Naive thymus-derived CD4-positive, alpha-beta T cell (primary cell): ENCODE measurements at regions of chr14 and their contacts with region 1.

Region 1: GRCh38 chr14:21498553-21499526 is 12.3 kb downstream of the METTL3 start:
- DNase-seq: peak in 7 of 9 donors; percentile 35 to 68 (median 61)
- ATAC-seq: peak; percentile 87
- H3K4me3 ChIP-seq: no peak overlapping the region
- H3K4me3 Mint-ChIP-seq: peak overlapping the region in 8 of 10 donors; percentile 2 to 39 (median 24)
- H3K27ac ChIP-seq: peak overlapping the region; percentile 52
- H3K27ac Mint-ChIP-seq: peak overlapping the region; percentile 56 to 90 (median 79)
- H3K4me1 ChIP-seq: peaks cover 4 to 8% of the 10 kb centered on the region in 2 donors
- H3K4me1 Mint-ChIP-seq: peaks cover 14 to 39% (median 28%) of the 10 kb centered on the region in 7 donors
- H3K27me3 ChIP-seq: no peaks in the 10 kb centered on the region
- H3K27me3 Mint-ChIP-seq: no peaks in the 10 kb centered on the region

Region 2: GRCh38 chr14:21486640-21487087 is 12.2 kb before region 1 on chr14:
- CTCF ChIA-PET with region 1: interaction called, 12 read pairs
- POLR2A ChIA-PET with region 1: interaction called, 4 read pairs
- intact Hi-C with region 1: no loop called
- DNase-seq: no peak
- ATAC-seq: no peak
- H3K4me3 ChIP-seq: no peak overlapping the region
- H3K4me3 Mint-ChIP-seq: no peak overlapping the region
- H3K27ac ChIP-seq: no peak overlapping the region
- H3K27ac Mint-ChIP-seq: peak overlapping the region in 2 of 9 donors; percentile 14 to 29
- H3K4me1 ChIP-seq: no peaks in the 10 kb centered on the region
- H3K4me1 Mint-ChIP-seq: peaks cover 0 to 18% (median 11%) of the 10 kb centered on the region in 7 donors
- H3K27me3 ChIP-seq: no peaks in the 10 kb centered on the region
- H3K27me3 Mint-ChIP-seq: no peaks in the 10 kb centered on the region

Region 3: GRCh38 chr14:21874167-21874566 is 375.3 kb after region 1 on chr14:
- CTCF ChIA-PET with region 1: no interaction called
- POLR2A ChIA-PET with region 1: no interaction called
- intact Hi-C with region 1: no loop called
- DNase-seq: peak in 1 of 9 donors; percentile 30
- ATAC-seq: peak; percentile 76
- H3K4me3 ChIP-seq: peak overlapping the region; percentile 47
- H3K4me3 Mint-ChIP-seq: peak overlapping the region; percentile 35 to 84 (median 70)
- H3K27ac ChIP-seq: peak overlapping the region; percentile 46
- H3K27ac Mint-ChIP-seq: peak overlapping the region; percentile 6 to 93 (median 84)
- H3K4me1 ChIP-seq: peaks cover 28 to 32% of the 10 kb centered on the region in 2 donors
- H3K4me1 Mint-ChIP-seq: peaks cover 17 to 53% (median 39%) of the 10 kb centered on the region in 7 donors
- H3K27me3 ChIP-seq: no peaks in the 10 kb centered on the region
- H3K27me3 Mint-ChIP-seq: peaks cover 0 to 4% (median 0%) of the 10 kb centered on the region in 5 donors